ENCODE measurements at regions of chr14 and their contacts with region 1.

Region 1: DNA sequence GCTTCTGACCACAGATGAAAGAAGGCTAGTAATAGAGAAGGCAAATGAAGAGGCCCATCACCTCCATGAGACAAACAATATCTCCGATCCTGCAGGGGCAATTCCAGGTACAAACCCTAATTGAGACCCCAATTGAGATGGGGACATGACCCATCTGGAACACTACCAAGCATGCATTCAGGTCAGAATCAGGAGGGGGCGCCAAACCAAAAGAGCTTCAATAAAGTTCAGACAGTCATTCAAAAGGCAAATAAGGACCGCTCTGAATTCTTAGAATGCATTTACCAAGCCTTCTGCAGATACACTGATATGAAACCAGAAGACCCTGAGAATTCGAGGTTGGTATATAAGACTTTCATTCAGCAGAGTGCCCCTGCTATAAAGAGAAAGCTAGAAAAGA is 10.2 kb upstream of the EDDM3B start:
- DNase-seq: no peak
- ATAC-seq: peak; percentile 74
- H3K4me3 ChIP-seq: no peak overlapping the region
- H3K27ac ChIP-seq: no peak overlapping the region
- H3K4me1 ChIP-seq: no peaks in the 10 kb centered on the region
- H3K27me3 ChIP-seq: no peaks in the 10 kb centered on the region
- CTCF ChIP-seq: peak; percentile 43 to 62 (median 54); a peak in 5 of 6 replicates
- EP300 ChIP-seq: no peak
- POLR2A ChIP-seq: no peak
- RAD21 ChIP-seq: peak; percentile 75

Region 2: GRCh38 chr14:20530771-20531571 is 227.0 kb before region 1 on chr14:
- CTCF ChIA-PET with region 1: no interaction called
- POLR2A ChIA-PET with region 1: no interaction called
- RAD21 ChIA-PET with region 1: no interaction called
- SMC1A ChIA-PET with region 1: no interaction called
- in situ Hi-C with region 1: no loop called
- intact Hi-C with region 1: no loop called
- DNase-seq: peak; percentile 21
- ATAC-seq: peak; percentile 98
- H3K4me3 ChIP-seq: no peak overlapping the region
- H3K27ac ChIP-seq: no peak overlapping the region
- H3K4me1 ChIP-seq: no peaks in the 10 kb centered on the region
- H3K27me3 ChIP-seq: no peaks in the 10 kb centered on the region
- CTCF ChIP-seq: peak; percentile 65 to 75 (median 73)
- EP300 ChIP-seq: no peak
- POLR2A ChIP-seq: no peak
- RAD21 ChIP-seq: peak; percentile 66

Region 3: DNA sequence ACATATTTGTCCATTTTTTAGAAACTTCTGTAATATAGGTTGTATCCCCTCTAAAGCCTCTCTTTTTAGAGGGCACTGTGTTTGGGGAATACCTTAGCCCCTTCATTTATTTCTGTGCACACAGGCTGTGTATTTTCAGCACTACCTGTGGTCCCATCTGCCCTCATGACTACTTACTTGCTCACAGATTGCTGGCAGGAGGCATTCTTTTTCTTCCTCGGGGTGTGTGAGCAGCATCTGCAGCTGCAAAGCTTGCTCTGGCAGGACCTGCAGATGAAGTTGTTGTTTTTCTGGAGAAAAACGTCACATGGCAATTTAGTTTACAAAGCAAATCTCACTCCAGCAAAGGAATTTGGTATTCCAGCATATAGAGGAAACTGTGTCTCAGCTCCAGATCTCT is 45.1 kb before region 1 on chr14:
- CTCF ChIA-PET with region 1: no interaction called
- POLR2A ChIA-PET with region 1: no interaction called
- RAD21 ChIA-PET with region 1: no interaction called
- SMC1A ChIA-PET with region 1: no interaction called
- in situ Hi-C with region 1: no loop called
- intact Hi-C with region 1: no loop called
- DNase-seq: no peak
- ATAC-seq: no peak
- H3K4me3 ChIP-seq: no peak overlapping the region
- H3K27ac ChIP-seq: no peak overlapping the region
- H3K4me1 ChIP-seq: no peaks in the 10 kb centered on the region
- H3K27me3 ChIP-seq: no peaks in the 10 kb centered on the region
- CTCF ChIP-seq: no peak
- EP300 ChIP-seq: no peak
- POLR2A ChIP-seq: no peak
- RAD21 ChIP-seq: no peak

Region 4: GRCh38 chr14:20782280-20782890 is 24.4 kb after region 1 on chr14:
- CTCF ChIA-PET with region 1: interaction called, 18 read pairs
- POLR2A ChIA-PET with region 1: interaction called, 4 read pairs
- RAD21 ChIA-PET with region 1: interaction called, 6 read pairs
- SMC1A ChIA-PET with region 1: interaction called, 17 read pairs
- in situ Hi-C with region 1: no loop called
- intact Hi-C with region 1: no loop called
- DNase-seq: no peak
- ATAC-seq: peak; percentile 80
- H3K4me3 ChIP-seq: peak overlapping the region; percentile 76
- H3K27ac ChIP-seq: peak overlapping the region; percentile 92
- H3K4me1 ChIP-seq: peaks cover 10% of the 10 kb centered on the region
- H3K27me3 ChIP-seq: no peaks in the 10 kb centered on the region
- CTCF ChIP-seq: no peak
- EP300 ChIP-seq: 0 out of 4 replicates have a peak, but pooled peaks of 1 of the 2 experiments have one; percentile 25
- POLR2A ChIP-seq: no peak
- RAD21 ChIP-seq: no peak

Region 5: DNA sequence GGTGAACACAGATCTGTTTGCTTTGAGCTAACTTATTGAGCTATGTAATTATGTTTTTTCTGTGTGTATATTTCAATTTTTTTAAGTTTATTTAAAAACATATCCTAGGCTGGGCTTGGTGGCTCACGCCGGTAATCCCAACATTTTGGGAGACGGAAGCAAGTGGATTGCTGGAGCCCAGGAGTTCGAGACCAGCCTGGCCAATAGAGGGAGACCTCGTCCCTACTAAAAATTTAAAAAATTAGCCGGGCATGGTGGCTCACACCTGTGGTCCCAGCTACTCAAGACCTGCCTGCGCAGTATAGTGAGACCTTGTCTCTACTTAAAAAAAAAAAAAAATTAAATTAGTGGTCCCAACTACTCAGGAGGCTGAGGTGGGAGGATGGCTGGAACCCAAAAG is 60.9 kb after region 1 on chr14:
- CTCF ChIA-PET with region 1: interaction called, 16 read pairs
- POLR2A ChIA-PET with region 1: no interaction called
- RAD21 ChIA-PET with region 1: interaction called, 5 read pairs
- SMC1A ChIA-PET with region 1: interaction called, 4 read pairs
- in situ Hi-C with region 1: no loop called
- intact Hi-C with region 1: no loop called
- DNase-seq: no peak
- ATAC-seq: no peak
- H3K4me3 ChIP-seq: no peak overlapping the region
- H3K27ac ChIP-seq: no peak overlapping the region
- H3K4me1 ChIP-seq: peaks cover 17% of the 10 kb centered on the region
- H3K27me3 ChIP-seq: no peaks in the 10 kb centered on the region
- CTCF ChIP-seq: peak in 1 of 3 experiments; percentile 24; a peak in 1 of 6 replicates
- EP300 ChIP-seq: no peak
- POLR2A ChIP-seq: no peak
- RAD21 ChIP-seq: peak; percentile 24; the same call in 1 of the 2 replicates

Region 6: DNA sequence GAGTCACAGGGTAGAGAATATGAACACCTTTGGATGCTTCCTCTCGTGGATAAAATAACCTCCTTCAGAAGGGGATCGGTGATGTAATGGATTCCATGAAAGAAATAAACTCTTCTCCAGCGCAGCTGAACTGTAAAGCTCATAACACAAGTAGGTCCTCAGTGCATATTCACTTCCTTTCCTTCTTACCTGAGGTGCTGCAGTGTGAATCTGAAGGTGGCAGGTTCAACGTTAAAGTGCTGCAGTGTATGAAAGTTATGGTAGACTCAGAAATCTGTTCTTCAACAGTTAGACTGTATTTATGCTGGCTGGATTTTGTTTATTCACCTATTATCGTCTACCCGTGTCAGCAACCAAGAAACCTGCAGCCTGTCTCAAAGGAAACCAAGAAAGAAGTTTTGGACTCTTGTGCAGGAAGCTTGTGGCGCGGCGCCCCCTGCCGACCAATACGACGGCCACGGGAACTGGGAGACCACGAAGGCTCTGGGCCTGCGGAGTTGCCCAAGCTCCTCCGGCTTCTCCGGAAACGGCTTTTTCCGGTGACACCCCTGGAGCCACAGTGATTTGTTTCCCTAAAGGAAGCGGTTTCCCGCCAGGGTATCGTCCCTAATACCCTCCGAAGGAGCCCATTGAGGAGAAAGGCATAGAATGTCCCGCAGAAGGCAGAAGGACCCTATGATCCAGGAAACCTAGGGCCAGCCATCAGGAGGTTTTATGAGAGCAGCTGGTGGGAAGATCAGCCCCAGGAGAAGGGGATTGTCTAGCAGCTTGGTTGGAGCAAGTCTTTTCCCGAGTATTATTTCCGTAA is 115.6 kb after region 1 on chr14:
- CTCF ChIA-PET with region 1: interaction called, 10 read pairs
- POLR2A ChIA-PET with region 1: no interaction called
- RAD21 ChIA-PET with region 1: no interaction called
- SMC1A ChIA-PET with region 1: no interaction called
- in situ Hi-C with region 1: no loop called
- intact Hi-C with region 1: no loop called
- DNase-seq: no peak
- ATAC-seq: peak; percentile 98
- H3K4me3 ChIP-seq: no peak overlapping the region
- H3K27ac ChIP-seq: no peak overlapping the region
- H3K4me1 ChIP-seq: no peaks in the 10 kb centered on the region; the same call in 1 of the 2 replicates
- H3K27me3 ChIP-seq: no peaks in the 10 kb centered on the region
- CTCF ChIP-seq: peak; percentile 75 to 88 (median 85)
- EP300 ChIP-seq: no peak
- POLR2A ChIP-seq: no peak
- RAD21 ChIP-seq: peak; percentile 69